Activated T-helper 1 cell treated with anti-CD3 and anti-CD28 coated beads, Interleukin-12 subunit alpha, Interleukin-12 subunit beta, Interleukin-2, Interleukin-4 antibody, amounts not matched to agents 30 ng/mL and 10 ng/mL and 1 ng/mL, durations not matched to agents 14 hours and 24 hours and 36 hours (primary cell): ENCODE measurements at regions of chr11 and their contacts with region 1.

Region 1: GRCh38 chr11:78339483-78339882 is 78.1 kb downstream of the GAB2 start:
- DNase-seq: no peak
- H3K4me3 Mint-ChIP-seq: peak overlapping the region; percentile 31
- H3K27ac Mint-ChIP-seq: peak overlapping the region; percentile 94
- H3K4me1 Mint-ChIP-seq: peaks cover 86% of the 10 kb centered on the region
- H3K27me3 Mint-ChIP-seq: no peaks in the 10 kb centered on the region

Region 2: GRCh38 chr11:78228467-78228866 is 111.0 kb before region 1 on chr11:
- intact Hi-C with region 1: loop called (anchors 5 kb)
- DNase-seq: peak; percentile 21
- H3K4me3 Mint-ChIP-seq: no peak overlapping the region
- H3K27ac Mint-ChIP-seq: no peak overlapping the region
- H3K4me1 Mint-ChIP-seq: peaks cover 75% of the 10 kb centered on the region
- H3K27me3 Mint-ChIP-seq: no peaks in the 10 kb centered on the region

Region 3: GRCh38 chr11:78325274-78325781 is 14.2 kb before region 1 on chr11:
- intact Hi-C with region 1: loop called (anchors 1 kb)
- DNase-seq: peak; percentile 28
- H3K4me3 Mint-ChIP-seq: peak overlapping the region; percentile 56
- H3K27ac Mint-ChIP-seq: peak overlapping the region; percentile 86
- H3K4me1 Mint-ChIP-seq: peaks cover 78% of the 10 kb centered on the region
- H3K27me3 Mint-ChIP-seq: no peaks in the 10 kb centered on the region

Region 4: DNA sequence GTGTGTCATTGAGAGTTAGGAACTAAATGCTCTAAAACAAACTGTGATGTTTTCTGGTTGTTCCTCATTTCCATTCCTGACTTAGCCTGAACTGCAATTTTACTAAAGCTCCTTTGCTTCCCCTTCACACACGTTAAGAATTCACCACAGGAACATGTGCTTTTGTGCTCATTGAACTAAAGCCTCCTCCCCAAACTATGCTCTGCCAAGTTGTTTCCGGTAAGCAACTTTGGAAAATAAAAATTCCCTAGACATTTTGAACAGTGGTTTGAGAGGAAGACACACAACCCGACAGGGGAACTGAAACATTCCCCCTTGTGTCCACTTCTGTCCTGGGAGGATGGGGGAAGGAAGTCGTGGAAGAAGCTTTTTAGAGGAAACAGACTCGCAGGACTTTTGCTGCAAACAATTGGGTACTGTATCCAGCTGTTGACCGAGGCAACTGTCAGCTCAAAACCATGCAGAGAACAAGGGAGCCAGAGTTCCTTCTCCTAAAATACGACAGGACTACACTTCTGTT is 11.2 kb after region 1 on chr11:
- intact Hi-C with region 1: loop called (anchors 1 kb)
- DNase-seq: no peak
- H3K4me3 Mint-ChIP-seq: peak overlapping the region; percentile 60
- H3K27ac Mint-ChIP-seq: peak overlapping the region; percentile 92
- H3K4me1 Mint-ChIP-seq: peaks cover 75% of the 10 kb centered on the region
- H3K27me3 Mint-ChIP-seq: peaks cover 5% of the 10 kb centered on the region